ENCODE measurements at regions of chr12 and their contacts with region 1.

Region 1: GRCh38 chr12:131673888-131674257 is 37.0 kb upstream of the SFSWAP start:
- DNase-seq: no peak
- H3K4me3 ChIP-seq: no peak overlapping the region
- H3K27ac ChIP-seq: no peak overlapping the region
- H3K4me1 ChIP-seq: no peaks in the 10 kb centered on the region
- H3K27me3 ChIP-seq: peaks cover 26% of the 10 kb centered on the region
- CTCF ChIP-seq: no peak

Region 2: GRCh38 chr12:131290255-131290959 is 383.5 kb before region 1 on chr12:
- CTCF ChIA-PET with region 1: no interaction called
- POLR2A ChIA-PET with region 1: no interaction called
- intact Hi-C with region 1: loop called (anchors 5 kb)
- DNase-seq: no peak
- H3K4me3 ChIP-seq: no peak overlapping the region
- H3K27ac ChIP-seq: no peak overlapping the region
- H3K4me1 ChIP-seq: no peaks in the 10 kb centered on the region
- H3K27me3 ChIP-seq: no peaks in the 10 kb centered on the region
- CTCF ChIP-seq: no peak

Measured in A673 (cell line).